PC-3 (cell line): ENCODE measurements at regions of chr7 and their contacts with region 1.

Region 1: DNA sequence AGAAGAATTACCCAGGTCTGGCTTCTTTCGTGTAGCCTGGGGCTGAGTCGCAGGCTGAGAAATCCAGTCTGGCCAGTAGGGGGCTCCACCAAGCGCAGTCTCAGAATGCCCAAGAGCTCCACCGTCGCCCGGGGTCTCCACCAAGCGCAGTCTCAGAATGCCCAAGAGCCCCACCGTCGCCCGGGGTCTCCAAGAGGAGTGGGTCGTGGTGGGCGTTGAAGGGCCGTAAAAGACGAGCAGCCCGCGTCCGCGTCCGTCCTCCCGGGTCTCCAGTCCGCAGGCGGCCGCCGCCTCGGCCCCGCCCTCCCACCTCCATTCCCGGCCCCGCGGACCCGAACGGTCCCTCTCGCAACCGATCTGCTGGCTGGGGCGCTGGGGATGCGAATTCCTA is 895 bp upstream of the ZYX start:
- DNase-seq: peak; percentile 79
- ATAC-seq: peak; percentile 34
- H3K4me3 ChIP-seq: peak overlapping the region; percentile 96
- H3K27ac ChIP-seq: peak overlapping the region; percentile 95
- H3K4me1 ChIP-seq: peaks cover 55% of the 10 kb centered on the region
- H3K27me3 ChIP-seq: no peaks in the 10 kb centered on the region
- CTCF ChIP-seq: peak; percentile 87

Region 2: GRCh38 chr7:143325240-143325639 is 55.0 kb before region 1 on chr7:
- CTCF ChIA-PET with region 1: no interaction called
- POLR2A ChIA-PET with region 1: no interaction called
- intact Hi-C with region 1: loop called (anchors 1 kb)
- DNase-seq: peak; percentile 80
- ATAC-seq: peak; percentile 92
- H3K4me3 ChIP-seq: 0 out of 2 replicates have a peak overlapping the region, but pooled peaks have one; percentile 4
- H3K27ac ChIP-seq: peak overlapping the region; percentile 81
- H3K4me1 ChIP-seq: peaks cover 34% of the 10 kb centered on the region
- H3K27me3 ChIP-seq: no peaks in the 10 kb centered on the region
- CTCF ChIP-seq: no peak

Region 3: GRCh38 chr7:143407291-143408251 is 27.3 kb after region 1 on chr7:
- CTCF ChIA-PET with region 1: no interaction called
- POLR2A ChIA-PET with region 1: no interaction called
- intact Hi-C with region 1: no loop called
- DNase-seq: peak; percentile 68
- ATAC-seq: peak; percentile 29
- H3K4me3 ChIP-seq: peak overlapping the region; percentile 95
- H3K27ac ChIP-seq: peak overlapping the region; percentile 40
- H3K4me1 ChIP-seq: peaks cover 24% of the 10 kb centered on the region
- H3K27me3 ChIP-seq: no peaks in the 10 kb centered on the region
- CTCF ChIP-seq: no peak

Region 4: GRCh38 chr7:143422033-143422432 is 41.8 kb after region 1 on chr7:
- CTCF ChIA-PET with region 1: interaction called, 12 read pairs
- POLR2A ChIA-PET with region 1: no interaction called
- intact Hi-C with region 1: loop called (anchors 5 kb)
- DNase-seq: no peak
- ATAC-seq: no peak
- H3K4me3 ChIP-seq: no peak overlapping the region
- H3K27ac ChIP-seq: no peak overlapping the region
- H3K4me1 ChIP-seq: peaks cover 12% of the 10 kb centered on the region
- H3K27me3 ChIP-seq: no peaks in the 10 kb centered on the region
- CTCF ChIP-seq: no peak